Tibial artery (tissue), 4 donors: ENCODE measurements at regions of chr6 and their contacts with region 1.

Region 1: DNA sequence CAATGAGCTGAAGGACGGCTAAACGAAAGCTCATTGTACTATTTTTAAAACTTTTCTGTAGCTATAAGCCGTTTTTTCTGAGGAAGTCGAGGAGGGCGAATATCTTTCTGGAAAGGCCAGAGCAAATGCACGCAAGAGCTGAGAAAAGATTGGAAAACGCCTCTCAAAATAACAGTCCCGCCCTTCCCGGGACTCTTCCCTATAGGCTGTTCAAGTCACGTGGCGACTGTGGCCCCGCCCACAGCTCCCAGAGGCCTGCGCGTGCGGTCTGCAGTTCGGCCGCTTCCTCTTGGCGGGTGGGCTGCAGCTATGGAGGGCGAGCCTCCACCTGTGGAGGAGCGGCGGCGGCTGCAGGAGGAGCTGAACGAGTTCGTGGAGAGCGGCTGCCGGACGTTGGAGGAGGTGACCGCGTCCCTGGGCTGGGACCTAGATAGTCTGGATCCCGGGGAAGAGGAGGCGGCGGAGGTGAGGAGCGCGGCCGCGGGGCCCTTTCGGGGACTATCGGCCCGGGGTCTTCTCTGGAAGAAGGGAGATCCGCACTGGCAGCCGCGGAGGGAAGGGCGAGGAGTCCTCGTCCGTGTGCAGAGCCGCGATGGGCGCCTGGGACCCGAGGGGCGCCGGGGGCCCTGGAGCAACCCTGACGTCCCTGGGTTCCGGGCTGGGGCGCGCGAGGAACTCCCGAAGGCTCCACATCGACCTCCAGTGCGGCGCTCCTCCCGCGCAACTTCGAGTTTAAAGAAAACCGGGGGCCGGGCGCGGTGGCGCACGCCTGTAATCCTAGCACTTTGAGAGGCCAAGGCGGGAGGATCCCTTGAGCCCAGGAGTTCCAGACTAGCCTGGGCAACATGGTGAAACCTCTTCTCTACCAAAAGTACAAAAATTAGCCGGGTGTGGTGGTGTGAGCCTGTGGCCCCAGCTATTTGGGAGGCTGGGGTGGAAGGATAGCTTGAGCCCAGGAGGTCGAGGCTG is at the start of gene SNRNP48:
- DNase-seq: peak; percentile 97
- H3K4me3 ChIP-seq: peak within 1 kb of the TSS; percentile 78 to 95
- H3K27ac ChIP-seq: peak within 1 kb of the TSS; percentile 75 to 76
- H3K4me1 ChIP-seq: peaks cover 0 to 31% (median 16%) of the 10 kb centered on the region in 4 donors
- H3K27me3 ChIP-seq: no peaks in the 10 kb centered on the region
- CTCF ChIP-seq: peak in 1 of 2 experiments; percentile 8

Region 2: GRCh38 chr6:7300926-7301325 is 289.3 kb before region 1 on chr6:
- intact Hi-C with region 1: loop called (anchors 10 kb)
- DNase-seq: no peak
- H3K4me3 ChIP-seq: no peak overlapping the region
- H3K27ac ChIP-seq: no peak overlapping the region
- H3K4me1 ChIP-seq: no peaks in the 10 kb centered on the region
- H3K27me3 ChIP-seq: no peaks in the 10 kb centered on the region
- CTCF ChIP-seq: no peak

Region 3: DNA sequence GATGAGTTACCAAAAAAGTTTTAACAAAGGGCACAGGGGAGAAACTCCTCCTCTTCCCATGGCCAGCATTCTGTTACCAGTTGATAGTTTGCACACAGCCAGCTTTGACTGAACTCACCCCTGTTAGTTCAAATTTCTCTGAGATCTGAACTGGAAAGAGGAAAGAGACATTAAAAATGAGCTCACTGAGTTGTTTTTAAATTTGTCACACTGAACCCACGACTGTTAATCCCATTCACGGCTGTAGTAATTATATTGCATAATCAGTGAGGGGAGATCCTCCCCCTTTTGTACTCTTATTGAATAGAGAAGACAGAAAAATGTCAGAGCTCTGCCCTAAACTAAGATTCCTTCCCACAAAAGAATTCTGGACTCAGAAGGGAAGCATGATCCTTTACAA is 66.3 kb before region 1 on chr6:
- intact Hi-C with region 1: no loop called
- DNase-seq: no peak
- H3K4me3 ChIP-seq: no peak overlapping the region
- H3K27ac ChIP-seq: no peak overlapping the region
- H3K4me1 ChIP-seq: no peaks in the 10 kb centered on the region
- H3K27me3 ChIP-seq: peaks cover 0 to 20% of the 10 kb centered on the region in 2 donors
- CTCF ChIP-seq: no peak

Region 4: GRCh38 chr6:7561153-7561964 is 28.9 kb before region 1 on chr6:
- intact Hi-C with region 1: no loop called
- DNase-seq: no peak
- H3K4me3 ChIP-seq: no peak overlapping the region
- H3K27ac ChIP-seq: no peak overlapping the region
- H3K4me1 ChIP-seq: no peaks in the 10 kb centered on the region
- H3K27me3 ChIP-seq: peaks cover 0 to 16% of the 10 kb centered on the region in 2 donors
- CTCF ChIP-seq: no peak